HEK293 (cell line): ENCODE measurements at regions of chr1 and their contacts with region 1.

Region 1: DNA sequence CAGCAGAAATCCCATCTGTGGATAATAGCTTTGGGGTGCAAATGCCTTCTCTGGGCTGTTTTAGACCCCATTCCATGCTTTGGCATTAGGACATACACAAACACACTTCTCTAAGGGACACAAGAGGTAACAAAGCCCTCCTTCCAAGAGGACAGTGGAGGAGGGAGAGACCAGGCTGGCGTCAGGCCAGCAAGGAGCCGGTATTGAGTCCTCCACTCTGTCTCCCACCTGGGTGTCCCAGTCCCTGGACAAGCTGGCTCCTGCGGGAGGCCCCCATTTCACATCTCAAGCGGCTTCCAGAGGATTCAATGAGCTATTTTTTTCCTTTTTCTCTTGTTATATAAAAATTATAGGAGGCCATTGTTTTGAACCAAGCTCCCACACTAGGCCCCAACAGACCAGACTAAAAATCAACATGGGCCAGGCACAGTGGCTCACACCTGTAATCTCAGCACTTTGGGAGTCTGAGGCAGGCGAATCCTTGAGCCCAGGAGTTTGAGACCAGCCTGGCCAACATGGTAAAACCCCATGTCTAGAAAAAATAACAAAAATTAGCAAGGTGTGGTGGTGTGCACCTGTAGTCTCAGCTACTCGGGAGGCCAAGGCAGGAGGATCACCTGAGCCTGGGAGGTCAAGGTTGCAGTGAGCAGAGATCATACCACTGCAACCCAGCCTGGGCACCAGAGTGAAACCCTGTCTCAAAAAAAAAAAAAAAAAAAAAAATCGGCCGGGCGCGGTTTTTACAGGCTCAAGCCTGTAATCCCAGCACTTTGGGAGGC is 142.9 kb downstream of the TOMM20 start:
- H3K4me3 ChIP-seq: no peak overlapping the region
- H3K27ac ChIP-seq: no peak overlapping the region
- H3K4me1 ChIP-seq: peaks cover 3% of the 10 kb centered on the region; the same call in 1 of the 2 replicates
- CTCF ChIP-seq: no peak

Region 2: DNA sequence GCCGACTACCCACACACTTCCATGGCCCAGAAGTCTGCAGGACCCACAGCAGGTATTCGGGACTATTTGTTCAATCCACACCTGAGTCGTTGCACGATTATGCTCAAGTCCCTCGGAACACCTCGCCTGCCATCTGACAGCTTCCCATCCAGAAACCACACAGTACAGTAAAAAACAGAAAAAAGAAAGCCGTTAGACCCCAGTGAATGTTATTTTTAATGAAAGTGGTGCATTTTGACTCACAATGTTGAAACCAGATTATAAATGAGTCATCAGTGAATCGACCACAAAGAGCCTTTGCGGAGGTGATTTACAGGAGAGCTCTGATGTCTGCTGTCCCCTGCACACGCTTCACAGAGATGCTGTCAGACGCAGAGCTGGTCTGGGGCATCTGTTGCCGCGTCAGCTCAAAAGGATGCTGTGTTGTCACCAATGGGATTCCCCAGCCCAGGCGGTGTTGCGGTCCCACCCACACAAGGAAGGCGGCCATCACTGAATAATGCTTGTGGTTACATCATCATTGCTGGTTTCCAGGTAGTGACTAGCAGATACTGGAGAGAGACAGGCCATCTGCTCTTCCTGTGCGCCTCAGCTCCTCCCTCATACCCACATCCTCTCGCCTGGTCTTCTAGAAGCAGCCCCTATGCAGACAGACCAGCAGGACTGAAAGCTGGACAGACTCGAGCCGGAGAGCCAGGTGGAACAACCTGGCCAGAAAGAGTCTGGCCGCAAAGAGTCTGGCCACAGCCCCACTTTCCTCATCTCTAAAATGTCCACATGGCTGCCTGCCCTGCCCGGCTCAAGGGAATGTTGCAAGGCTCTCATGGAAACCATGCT is 26.1 kb after region 1 on chr1:
- CTCF ChIA-PET with region 1: interaction called, 5 read pairs
- POLR2A ChIA-PET with region 1: interaction called, 13 read pairs
- H3K4me3 ChIP-seq: peak overlapping the region; percentile 3
- H3K27ac ChIP-seq: no peak overlapping the region; the same call in 1 of the 2 replicates
- H3K4me1 ChIP-seq: peaks cover 5% of the 10 kb centered on the region; the same call in 1 of the 2 replicates
- CTCF ChIP-seq: no peak